GM10248 (cell line): ENCODE measurements at regions of chr11 and their contacts with region 1.

Region 1: GRCh38 chr11:18105802-18106574 is at the start of gene SAAL1:
- DNase-seq: peak; percentile 93
- CTCF ChIP-seq: peak; percentile 96

Region 2: DNA sequence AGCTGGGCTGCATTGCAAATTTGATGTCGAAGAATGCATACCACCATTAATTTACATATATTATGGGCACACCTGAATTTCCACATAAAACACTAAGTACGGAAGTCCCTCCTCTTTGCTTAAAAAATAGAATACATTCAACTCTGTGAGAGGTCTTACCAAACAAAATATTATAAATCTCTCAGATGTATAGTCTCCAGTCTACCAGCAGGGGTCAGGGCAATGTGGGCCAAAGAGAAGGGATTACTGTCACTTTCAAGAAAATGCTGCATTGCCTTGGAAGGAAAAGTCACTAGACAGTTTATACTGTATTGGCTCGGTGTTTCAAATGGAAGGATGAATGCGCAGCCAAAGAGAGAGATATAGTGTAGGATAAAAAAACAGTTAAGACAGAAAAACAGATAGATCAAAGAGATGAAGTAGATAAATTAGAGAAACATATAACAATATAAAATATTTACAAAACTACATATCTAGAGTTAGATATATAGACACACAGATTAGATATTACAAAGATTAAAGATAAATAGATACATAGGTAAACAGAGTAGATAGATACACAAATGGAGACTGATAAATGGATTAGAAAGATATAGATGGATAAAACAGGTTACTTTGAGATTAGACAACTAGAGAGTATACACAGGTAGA is 114.1 kb before region 1 on chr11:
- CTCF ChIA-PET with region 1: interaction called, 19 read pairs
- POLR2A ChIA-PET with region 1: no interaction called
- DNase-seq: peak; percentile 69
- CTCF ChIP-seq: peak; percentile 66

Region 3: GRCh38 chr11:18088966-18089365 is 17.0 kb before region 1 on chr11:
- CTCF ChIA-PET with region 1: interaction called, 22 read pairs
- POLR2A ChIA-PET with region 1: no interaction called
- DNase-seq: no peak
- CTCF ChIP-seq: no peak